A673 (cell line): ENCODE measurements at regions of chr19 and their contacts with region 1.

Region 1: GRCh38 chr19:18903156-18904037 is 7.4 kb upstream of the CERS1 start:
- DNase-seq: no peak
- H3K4me3 ChIP-seq: no peak overlapping the region
- H3K27ac ChIP-seq: no peak overlapping the region
- H3K4me1 ChIP-seq: no peaks in the 10 kb centered on the region
- H3K27me3 ChIP-seq: no peaks in the 10 kb centered on the region
- CTCF ChIP-seq: 0 out of 2 replicates have a peak, but pooled peaks have one; percentile 7

Region 2: DNA sequence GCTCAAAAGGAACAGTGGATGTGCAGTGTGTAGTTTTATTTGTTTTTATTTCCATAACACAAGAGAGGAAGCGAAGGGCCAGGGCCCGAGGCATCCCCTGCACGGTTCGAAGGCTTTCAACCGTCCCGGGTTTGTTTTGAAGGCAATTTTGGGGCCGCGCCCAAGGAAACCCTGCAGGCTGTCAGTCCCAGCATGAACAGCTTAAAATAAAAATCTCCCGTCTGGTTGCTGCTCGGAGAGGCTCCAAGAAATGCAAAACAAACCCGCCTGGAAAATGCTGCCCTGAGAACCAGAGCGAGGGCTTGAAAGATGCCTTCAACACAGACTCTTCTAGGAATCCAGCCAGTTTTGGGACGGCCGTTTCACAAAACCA is 596.5 kb before region 1 on chr19:
- CTCF ChIA-PET with region 1: no interaction called
- POLR2A ChIA-PET with region 1: no interaction called
- intact Hi-C with region 1: no loop called
- DNase-seq: no peak
- H3K4me3 ChIP-seq: no peak overlapping the region
- H3K27ac ChIP-seq: no peak overlapping the region
- H3K4me1 ChIP-seq: peaks cover 17% of the 10 kb centered on the region
- H3K27me3 ChIP-seq: no peaks in the 10 kb centered on the region
- CTCF ChIP-seq: no peak

Region 3: DNA sequence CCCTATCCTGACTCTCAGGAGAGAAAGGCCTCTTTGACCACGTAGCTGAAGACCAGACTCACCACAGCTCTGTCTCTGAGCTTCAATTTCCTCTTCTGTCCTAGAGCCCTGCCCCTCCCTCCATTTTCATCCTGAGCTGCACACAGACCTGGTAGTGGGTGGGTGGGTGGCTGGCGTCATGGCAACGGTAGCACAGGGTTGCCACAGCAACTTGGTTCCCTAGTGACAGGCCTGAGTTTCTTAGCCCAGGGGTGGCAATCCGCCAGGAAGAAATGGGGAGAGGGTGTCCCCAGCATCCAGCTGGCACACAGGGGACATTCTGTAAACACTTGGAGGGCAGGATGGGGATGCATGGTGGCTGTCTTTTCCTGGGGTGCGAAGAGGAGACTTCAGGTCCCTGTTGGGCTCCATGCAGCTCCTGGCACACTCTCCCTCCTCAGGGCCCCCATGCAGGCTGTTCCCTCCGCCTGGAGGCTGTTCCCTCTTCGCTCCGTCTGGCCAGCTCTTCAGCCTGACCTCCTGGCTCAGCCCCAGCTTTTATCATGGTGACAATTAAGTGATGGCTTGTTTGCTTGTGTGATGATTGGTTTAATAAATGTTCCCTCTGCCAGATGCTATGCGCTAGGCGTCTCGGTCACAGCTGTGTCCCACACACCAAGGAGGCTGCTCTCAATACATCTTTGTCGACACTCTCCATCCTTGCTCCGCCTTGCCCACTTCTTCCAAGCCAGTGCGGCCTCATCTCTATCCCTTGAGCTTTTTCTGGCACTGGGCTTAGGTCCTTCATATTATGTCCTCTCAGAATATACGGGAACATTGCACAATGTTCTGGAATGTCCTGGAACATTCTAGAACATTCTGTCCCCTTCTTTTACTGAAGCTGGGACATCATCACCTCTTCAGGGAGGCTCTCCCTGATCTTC is 274.0 kb before region 1 on chr19:
- CTCF ChIA-PET with region 1: no interaction called
- POLR2A ChIA-PET with region 1: interaction called, 13 read pairs
- intact Hi-C with region 1: no loop called
- DNase-seq: no peak
- H3K4me3 ChIP-seq: no peak overlapping the region
- H3K27ac ChIP-seq: no peak overlapping the region
- H3K4me1 ChIP-seq: no peaks in the 10 kb centered on the region
- H3K27me3 ChIP-seq: no peaks in the 10 kb centered on the region
- CTCF ChIP-seq: no peak